ENCODE measurements at regions of chr6 and their contacts with region 1.

Region 1: DNA sequence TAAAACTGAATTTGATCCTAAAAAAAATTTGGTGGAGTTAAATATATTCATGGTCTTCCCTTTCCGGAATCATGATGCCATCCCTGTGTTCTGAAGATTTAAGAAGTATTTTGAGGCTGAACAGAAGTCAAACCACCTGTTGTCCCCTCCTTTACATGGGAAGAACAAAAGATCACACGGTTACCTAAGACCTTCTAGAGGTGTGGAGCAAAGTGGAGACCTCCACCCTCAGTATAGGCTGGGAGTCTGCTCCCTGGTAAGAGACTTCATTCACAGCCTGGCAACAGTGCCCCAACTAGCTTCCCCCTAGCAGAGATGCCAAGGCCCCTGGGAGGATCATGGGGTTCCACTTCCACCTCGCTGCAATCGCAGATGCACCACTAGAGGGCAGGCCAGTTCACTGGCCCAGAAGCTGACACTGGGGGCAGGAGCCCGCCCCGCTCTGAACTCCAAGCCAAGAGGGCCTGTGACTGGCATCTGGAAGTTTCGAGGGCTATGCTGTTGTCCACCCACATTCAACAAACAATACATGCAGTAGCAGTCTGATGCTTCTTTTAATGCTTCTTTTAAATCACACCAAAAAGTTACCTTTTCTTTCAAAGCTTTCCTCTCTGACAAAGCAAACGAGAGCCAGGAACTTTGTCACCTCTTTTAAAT is 19.5 kb upstream of the UBE2J1 start:
- DNase-seq: peak; percentile 66 to 97 (median 84)

Region 2: GRCh38 chr6:88982720-88983119 is 389.3 kb before region 1 on chr6:
- intact Hi-C with region 1: loop called (anchors 10 kb)
- DNase-seq: no peak

Region 3: DNA sequence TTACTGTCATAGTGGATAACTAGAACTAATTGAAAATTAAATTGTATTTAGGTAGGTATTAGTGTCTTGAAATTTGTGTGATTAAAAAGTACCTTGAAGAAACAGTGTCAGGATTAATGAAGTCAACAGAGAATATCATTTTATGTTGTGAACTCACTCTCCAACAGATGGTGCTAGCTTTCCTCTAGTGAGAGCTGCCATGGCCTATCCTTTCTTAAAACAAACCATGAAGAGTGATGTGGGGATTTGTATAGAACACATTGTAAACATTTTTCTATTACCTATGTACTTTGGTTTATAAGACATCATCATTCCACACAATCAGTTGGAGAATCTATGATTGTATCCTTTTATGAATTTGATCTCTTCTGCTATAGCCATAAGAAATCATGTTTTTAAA is 249.4 kb before region 1 on chr6:
- intact Hi-C with region 1: loop called (anchors 5 kb)
- DNase-seq: no peak

Region 4: DNA sequence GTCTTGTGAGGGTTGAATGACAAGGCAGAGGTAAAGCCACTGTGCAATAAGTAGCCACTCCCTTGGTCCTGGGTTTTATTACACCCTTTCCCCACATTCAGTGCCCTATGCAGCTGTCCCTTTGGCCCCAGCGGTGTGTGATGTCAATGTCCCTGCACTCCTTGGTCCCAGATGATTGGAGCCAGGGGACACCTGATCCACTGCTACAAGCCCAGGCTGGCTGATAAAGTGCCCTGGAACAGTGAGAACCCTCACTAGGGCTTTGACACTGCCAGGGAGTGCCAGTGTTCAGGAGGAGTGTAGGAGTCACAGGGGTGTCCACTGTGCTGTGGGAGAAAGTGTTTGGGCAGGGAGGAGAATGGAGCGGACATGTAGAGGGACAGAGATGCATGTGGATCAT is 185.2 kb before region 1 on chr6:
- intact Hi-C with region 1: no loop called
- DNase-seq: no peak

Region 5: DNA sequence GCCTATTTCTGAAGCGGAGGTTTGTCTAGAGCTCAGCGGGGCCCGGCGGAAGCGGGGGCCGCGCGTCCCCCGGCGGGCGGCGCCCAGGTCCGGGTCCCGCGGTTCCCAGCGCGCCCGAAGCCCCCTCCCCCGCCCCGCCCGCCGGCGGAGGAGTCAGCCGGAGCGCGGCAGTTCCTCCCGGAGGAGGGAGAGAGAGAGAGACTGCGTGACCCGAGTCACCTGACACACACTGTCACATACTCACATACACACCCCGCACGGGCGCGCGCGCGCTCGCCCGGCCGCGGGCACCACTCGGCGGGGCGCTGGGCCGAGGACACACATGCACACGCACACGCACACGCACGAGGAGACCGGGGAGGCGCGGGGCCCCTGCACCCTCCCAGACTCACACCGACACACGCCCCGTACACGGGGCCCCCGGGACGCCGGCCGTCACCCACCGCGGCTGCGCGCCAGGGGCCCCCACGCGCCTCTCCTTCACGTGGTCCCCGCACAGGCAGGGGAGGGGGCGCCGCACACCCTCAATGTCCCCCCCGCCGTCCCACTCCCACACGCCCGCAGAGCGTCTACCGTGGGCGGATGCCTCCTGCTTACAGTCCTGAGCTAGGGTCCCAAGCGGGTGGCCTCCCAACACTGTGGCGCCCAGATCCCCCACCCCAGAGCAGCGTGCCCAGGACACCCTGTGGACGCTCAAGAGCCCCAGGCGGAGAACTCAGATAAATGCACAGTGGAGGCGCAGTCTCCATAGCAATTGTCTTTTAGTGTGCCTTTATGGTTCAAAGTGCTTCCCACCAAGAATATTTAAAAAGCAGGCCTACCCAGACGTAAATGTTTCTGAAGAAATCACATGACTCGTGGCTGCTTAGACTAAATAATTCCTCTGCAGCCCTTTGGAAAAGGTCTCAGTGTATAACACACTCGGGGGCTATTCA is 40.4 kb after region 1 on chr6 and contains the start of gene RRAGD:
- intact Hi-C with region 1: loop called (anchors 5 kb)
- DNase-seq: peak; percentile 72 to 98 (median 83)

Region 6: GRCh38 chr6:89638320-89639195 is 266.6 kb after region 1 on chr6 and contains the start of gene LYRM2:
- intact Hi-C with region 1: loop called (anchors 5 kb)
- DNase-seq: peak; percentile 92 to 99 (median 96)

Measured in posterior cingulate gyrus (tissue), 11 donors.